CD8-positive, alpha-beta T cell (primary cell): ENCODE measurements at regions of chr20 and their contacts with region 1.

Region 1: GRCh38 chr20:35463455-35464300 is 8.3 kb downstream of the CEP250 start:
- DNase-seq: peak; percentile 13 to 78 (median 60)
- ATAC-seq: peak; percentile 94
- H3K4me3 ChIP-seq: no peak overlapping the region
- H3K4me3 Mint-ChIP-seq: no peak overlapping the region
- H3K27ac ChIP-seq: no peak overlapping the region
- H3K27ac Mint-ChIP-seq: no peak overlapping the region
- H3K4me1 ChIP-seq: peaks cover 3% of the 10 kb centered on the region
- H3K4me1 Mint-ChIP-seq: peaks cover 9% of the 10 kb centered on the region
- H3K27me3 ChIP-seq: no peaks in the 10 kb centered on the region
- H3K27me3 Mint-ChIP-seq: no peaks in the 10 kb centered on the region
- CTCF ChIP-seq: peak; percentile 86

Region 2: GRCh38 chr20:35478804-35479472 is 15.3 kb after region 1 on chr20:
- CTCF ChIA-PET with region 1: interaction called, 22 read pairs
- POLR2A ChIA-PET with region 1: no interaction called
- intact Hi-C with region 1: no loop called
- DNase-seq: peak in 3 of 9 experiments; percentile 21 to 29 (median 21)
- ATAC-seq: no peak
- H3K4me3 ChIP-seq: no peak overlapping the region
- H3K4me3 Mint-ChIP-seq: no peak overlapping the region
- H3K27ac ChIP-seq: no peak overlapping the region
- H3K27ac Mint-ChIP-seq: peak overlapping the region; percentile 70
- H3K4me1 ChIP-seq: no peaks in the 10 kb centered on the region
- H3K4me1 Mint-ChIP-seq: peaks cover 9% of the 10 kb centered on the region
- H3K27me3 ChIP-seq: no peaks in the 10 kb centered on the region
- H3K27me3 Mint-ChIP-seq: no peaks in the 10 kb centered on the region
- CTCF ChIP-seq: no peak

Region 3: GRCh38 chr20:35502352-35502751 is 38.7 kb after region 1 on chr20:
- CTCF ChIA-PET with region 1: interaction called, 14 read pairs
- POLR2A ChIA-PET with region 1: no interaction called
- intact Hi-C with region 1: no loop called
- DNase-seq: no peak
- ATAC-seq: no peak
- H3K4me3 ChIP-seq: no peak overlapping the region
- H3K4me3 Mint-ChIP-seq: no peak overlapping the region
- H3K27ac ChIP-seq: no peak overlapping the region
- H3K27ac Mint-ChIP-seq: peak overlapping the region; percentile 64
- H3K4me1 ChIP-seq: peaks cover 8% of the 10 kb centered on the region
- H3K4me1 Mint-ChIP-seq: peaks cover 29% of the 10 kb centered on the region
- H3K27me3 ChIP-seq: no peaks in the 10 kb centered on the region
- H3K27me3 Mint-ChIP-seq: no peaks in the 10 kb centered on the region
- CTCF ChIP-seq: no peak

Region 4: GRCh38 chr20:35601008-35601973 is 137.6 kb after region 1 on chr20:
- CTCF ChIA-PET with region 1: interaction called, 7 read pairs
- POLR2A ChIA-PET with region 1: no interaction called
- intact Hi-C with region 1: loop called in 1 of 2 experiments (anchors 1 kb)
- DNase-seq: peak; percentile 59 to 90 (median 83)
- ATAC-seq: peak; percentile 92
- H3K4me3 ChIP-seq: peak overlapping the region; percentile 58 to 59
- H3K4me3 Mint-ChIP-seq: peak overlapping the region; percentile 82
- H3K27ac ChIP-seq: no peak overlapping the region
- H3K27ac Mint-ChIP-seq: no peak overlapping the region
- H3K4me1 ChIP-seq: peaks cover 16% of the 10 kb centered on the region
- H3K4me1 Mint-ChIP-seq: peaks cover 11% of the 10 kb centered on the region
- H3K27me3 ChIP-seq: peaks cover 5 to 8% of the 10 kb centered on the region in 2 experiments
- H3K27me3 Mint-ChIP-seq: peaks cover 14% of the 10 kb centered on the region
- CTCF ChIP-seq: peak; percentile 66

Region 5: DNA sequence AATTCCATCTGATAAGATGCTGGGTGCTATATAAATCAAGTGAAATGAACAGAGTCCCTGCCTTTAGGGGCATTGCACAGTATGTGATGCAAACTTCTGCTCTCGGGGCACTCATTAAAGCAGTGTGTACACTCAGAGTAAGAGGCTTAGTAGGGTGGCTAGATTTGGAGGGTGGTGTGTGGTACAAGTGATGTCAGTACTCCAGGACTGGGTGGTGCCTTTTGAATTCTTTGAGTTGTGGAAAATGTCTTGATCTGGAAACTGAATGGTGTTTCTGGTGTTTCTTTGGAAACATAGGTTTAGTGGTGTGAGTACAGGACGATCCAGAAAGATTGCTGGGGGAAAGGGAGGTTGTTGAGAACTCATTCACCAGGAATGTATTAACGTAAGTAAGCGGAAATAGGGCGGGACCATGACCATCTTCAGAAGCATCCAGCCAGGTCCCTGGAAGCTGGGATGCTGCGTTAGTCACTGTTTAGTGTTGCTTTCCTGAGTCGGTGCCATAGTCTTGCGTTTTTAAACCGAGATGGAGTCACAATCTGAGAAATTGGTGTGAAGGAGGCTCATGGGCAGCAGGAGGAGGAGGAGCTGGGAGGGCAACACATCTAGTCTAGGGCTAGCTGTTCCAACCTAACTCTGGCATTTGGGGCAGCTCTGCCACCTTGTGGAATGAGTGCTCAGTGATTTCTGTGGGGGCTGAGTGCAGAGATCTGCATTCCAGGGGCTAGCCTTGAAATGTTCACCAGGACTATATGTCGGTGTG is 420.3 kb after region 1 on chr20:
- CTCF ChIA-PET with region 1: interaction called, 54 read pairs
- POLR2A ChIA-PET with region 1: interaction called, 3 read pairs
- intact Hi-C with region 1: loop called (anchors 1 kb)
- DNase-seq: peak; percentile 30 to 75 (median 60)
- ATAC-seq: peak; percentile 91
- H3K4me3 ChIP-seq: no peak overlapping the region
- H3K4me3 Mint-ChIP-seq: no peak overlapping the region
- H3K27ac ChIP-seq: no peak overlapping the region
- H3K27ac Mint-ChIP-seq: no peak overlapping the region
- H3K4me1 ChIP-seq: peaks cover 6% of the 10 kb centered on the region
- H3K4me1 Mint-ChIP-seq: peaks cover 17% of the 10 kb centered on the region
- H3K27me3 ChIP-seq: no peaks in the 10 kb centered on the region
- H3K27me3 Mint-ChIP-seq: no peaks in the 10 kb centered on the region
- CTCF ChIP-seq: peak; percentile 60